ENCODE measurements at regions of chr2 and their contacts with region 1.

Region 1: DNA sequence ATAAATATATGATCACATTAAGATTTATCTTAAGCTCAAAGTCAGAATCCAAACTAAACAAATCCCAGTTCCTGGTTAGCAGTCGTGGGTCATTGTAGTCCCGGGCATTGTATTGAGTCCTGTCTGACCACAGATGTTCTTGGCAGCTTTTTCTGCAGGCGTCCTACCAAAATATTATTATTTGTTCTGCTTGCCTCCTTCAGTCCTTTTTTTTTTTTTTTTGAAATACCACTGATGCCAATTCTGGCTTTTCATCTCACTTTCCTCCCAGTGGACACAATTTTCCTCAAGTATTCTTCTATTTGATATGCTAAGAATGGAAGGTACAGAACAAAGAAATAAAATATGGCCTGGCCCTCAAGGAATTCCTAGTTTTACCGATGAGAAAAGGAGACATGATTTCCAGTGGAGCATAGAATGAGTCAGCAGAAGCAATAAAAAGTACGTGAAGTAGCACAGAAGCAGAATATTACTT is 151.6 kb downstream of the CSRNP3 start:
- DNase-seq: no peak
- ATAC-seq: no peak
- H3K4me3 ChIP-seq: no peak overlapping the region
- H3K27ac ChIP-seq: no peak overlapping the region
- H3K4me1 ChIP-seq: no peaks in the 10 kb centered on the region
- H3K27me3 ChIP-seq: no peaks in the 10 kb centered on the region
- CTCF ChIP-seq: no peak
- EP300 ChIP-seq: no peak
- POLR2A ChIP-seq: no peak
- RAD21 ChIP-seq: no peak

Region 2: GRCh38 chr2:165610591-165611029 is 10.5 kb before region 1 on chr2:
- CTCF ChIA-PET with region 1: interaction called, 9 read pairs
- POLR2A ChIA-PET with region 1: interaction called, 8 read pairs
- RAD21 ChIA-PET with region 1: interaction called, 6 read pairs
- SMC1A ChIA-PET with region 1: interaction called, 24 read pairs
- in situ Hi-C with region 1: no loop called
- intact Hi-C with region 1: no loop called
- DNase-seq: no peak
- ATAC-seq: peak; percentile 86
- H3K4me3 ChIP-seq: no peak overlapping the region
- H3K27ac ChIP-seq: no peak overlapping the region
- H3K4me1 ChIP-seq: no peaks in the 10 kb centered on the region
- H3K27me3 ChIP-seq: no peaks in the 10 kb centered on the region
- CTCF ChIP-seq: no peak
- EP300 ChIP-seq: no peak
- POLR2A ChIP-seq: no peak
- RAD21 ChIP-seq: no peak

Region 3: DNA sequence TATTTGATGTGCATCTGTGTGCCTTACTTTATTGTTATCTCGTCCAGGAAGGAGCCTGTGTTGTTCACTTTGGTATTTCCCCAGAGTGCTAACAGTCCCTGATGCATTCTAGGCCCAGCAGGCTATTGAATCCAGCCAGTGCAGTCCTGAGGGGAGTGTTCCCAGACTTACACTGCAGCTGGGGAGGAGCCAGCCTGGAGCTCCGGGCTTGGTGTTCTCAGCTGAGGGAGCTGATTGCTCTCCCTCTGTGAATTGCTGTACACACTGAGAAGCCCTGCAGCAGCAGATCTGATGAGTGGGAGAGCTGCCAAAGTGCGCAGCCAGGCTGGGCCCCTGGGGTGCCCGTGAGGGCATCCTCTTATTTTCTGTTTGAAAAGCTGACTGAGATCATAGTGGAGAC is 13.7 kb after region 1 on chr2:
- CTCF ChIA-PET with region 1: interaction called, 4 read pairs
- POLR2A ChIA-PET with region 1: interaction called, 3 read pairs
- RAD21 ChIA-PET with region 1: interaction called, 3 read pairs
- SMC1A ChIA-PET with region 1: interaction called, 61 read pairs
- in situ Hi-C with region 1: no loop called
- intact Hi-C with region 1: no loop called
- DNase-seq: no peak
- ATAC-seq: peak; percentile 54
- H3K4me3 ChIP-seq: no peak overlapping the region
- H3K27ac ChIP-seq: no peak overlapping the region
- H3K4me1 ChIP-seq: no peaks in the 10 kb centered on the region
- H3K27me3 ChIP-seq: no peaks in the 10 kb centered on the region
- CTCF ChIP-seq: no peak
- EP300 ChIP-seq: no peak
- POLR2A ChIP-seq: no peak
- RAD21 ChIP-seq: no peak

Region 4: GRCh38 chr2:165645930-165646831 is 25.1 kb after region 1 on chr2:
- CTCF ChIA-PET with region 1: interaction called, 6 read pairs
- POLR2A ChIA-PET with region 1: interaction called, 3 read pairs
- RAD21 ChIA-PET with region 1: interaction called, 4 read pairs
- SMC1A ChIA-PET with region 1: interaction called, 22 read pairs
- in situ Hi-C with region 1: no loop called
- intact Hi-C with region 1: no loop called
- DNase-seq: no peak
- ATAC-seq: no peak
- H3K4me3 ChIP-seq: no peak overlapping the region
- H3K27ac ChIP-seq: no peak overlapping the region
- H3K4me1 ChIP-seq: no peaks in the 10 kb centered on the region
- H3K27me3 ChIP-seq: no peaks in the 10 kb centered on the region
- CTCF ChIP-seq: no peak
- EP300 ChIP-seq: no peak
- POLR2A ChIP-seq: no peak
- RAD21 ChIP-seq: no peak

Region 5: GRCh38 chr2:166451468-166451867 is 830.3 kb after region 1 on chr2:
- CTCF ChIA-PET with region 1: no interaction called
- POLR2A ChIA-PET with region 1: no interaction called
- RAD21 ChIA-PET with region 1: no interaction called
- SMC1A ChIA-PET with region 1: no interaction called
- in situ Hi-C with region 1: no loop called
- intact Hi-C with region 1: no loop called
- DNase-seq: no peak
- ATAC-seq: no peak
- H3K4me3 ChIP-seq: no peak overlapping the region
- H3K27ac ChIP-seq: no peak overlapping the region
- H3K4me1 ChIP-seq: no peaks in the 10 kb centered on the region
- H3K27me3 ChIP-seq: no peaks in the 10 kb centered on the region
- CTCF ChIP-seq: no peak
- EP300 ChIP-seq: no peak
- POLR2A ChIP-seq: no peak
- RAD21 ChIP-seq: no peak